ENCODE measurements at regions of chr2 and their contacts with region 1.

Region 1: GRCh38 chr2:71510196-71510807 is 56.9 kb downstream of the DYSF start:
- DNase-seq: peak; percentile 35
- H3K4me3 ChIP-seq: no peak overlapping the region
- H3K27ac ChIP-seq: no peak overlapping the region
- H3K4me1 ChIP-seq: no peaks in the 10 kb centered on the region
- H3K27me3 ChIP-seq: no peaks in the 10 kb centered on the region
- CTCF ChIP-seq: peak; percentile 80 to 95

Region 2: DNA sequence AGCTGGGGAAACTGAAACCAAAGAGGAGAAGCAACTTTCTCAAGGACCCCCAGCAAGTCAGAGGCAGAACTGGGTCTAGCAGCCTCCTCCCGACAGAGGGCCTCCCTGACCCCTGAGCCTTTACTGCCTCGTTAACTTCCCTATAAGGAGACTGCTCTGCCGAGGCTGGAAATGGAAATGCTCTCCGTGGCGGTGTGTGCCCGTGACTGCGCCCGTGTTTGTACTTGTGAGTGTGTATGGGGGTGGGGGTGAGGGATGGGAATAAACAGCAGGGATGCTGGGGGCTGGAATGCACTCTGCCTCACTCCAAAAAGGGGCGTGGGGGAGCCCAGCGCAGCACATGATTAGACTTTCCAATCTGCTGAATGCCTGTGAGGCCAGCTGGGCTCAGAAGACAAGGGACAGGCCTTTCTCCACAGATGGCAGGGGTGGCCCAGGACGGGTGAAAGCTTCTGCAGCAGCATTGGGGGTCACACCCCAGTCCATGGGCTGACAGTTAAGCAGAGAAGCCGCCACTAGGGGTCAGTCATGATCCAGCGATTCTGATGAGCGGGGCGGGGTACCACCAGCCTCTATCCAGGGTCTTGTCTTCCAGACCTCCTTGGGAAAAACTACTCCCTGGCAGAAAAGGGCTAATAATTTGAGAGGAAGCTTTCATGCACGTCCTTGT is 353.0 kb before region 1 on chr2:
- CTCF ChIA-PET with region 1: interaction called, 3 read pairs
- dilution Hi-C with region 1: no loop called
- in situ Hi-C with region 1: no loop called
- intact Hi-C with region 1: loop called (anchors 1 kb)
- DNase-seq: no peak
- H3K4me3 ChIP-seq: no peak overlapping the region
- H3K27ac ChIP-seq: no peak overlapping the region
- H3K4me1 ChIP-seq: no peaks in the 10 kb centered on the region
- H3K27me3 ChIP-seq: no peaks in the 10 kb centered on the region
- CTCF ChIP-seq: peak; percentile 66 to 79

Region 3: DNA sequence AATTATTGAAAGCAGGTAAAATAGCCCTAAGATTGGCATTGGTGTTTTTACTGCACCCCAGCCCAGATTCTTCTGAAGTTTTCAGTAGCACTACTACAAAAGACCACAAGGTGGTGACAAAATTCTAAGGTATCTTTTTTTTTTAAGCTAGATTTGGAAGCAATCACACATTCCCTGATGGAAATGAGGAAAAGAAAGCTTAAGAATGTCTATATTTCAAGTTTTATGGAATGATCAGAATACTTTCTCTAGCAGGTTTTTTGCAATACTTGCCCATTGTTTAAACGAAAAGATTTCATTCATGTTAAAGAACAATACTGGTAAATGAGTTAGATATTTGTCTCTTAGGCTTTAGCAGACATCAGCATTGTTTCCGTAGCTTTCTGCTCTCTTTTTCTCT is 210.8 kb before region 1 on chr2:
- CTCF ChIA-PET with region 1: interaction called, 17 read pairs
- dilution Hi-C with region 1: no loop called
- in situ Hi-C with region 1: loop called (anchors 10 kb)
- intact Hi-C with region 1: loop called (anchors 1 kb)
- DNase-seq: peak; percentile 16
- H3K4me3 ChIP-seq: no peak overlapping the region
- H3K27ac ChIP-seq: no peak overlapping the region
- H3K4me1 ChIP-seq: peaks cover 12% of the 10 kb centered on the region
- H3K27me3 ChIP-seq: no peaks in the 10 kb centered on the region
- CTCF ChIP-seq: peak; percentile 64 to 71

Region 4: DNA sequence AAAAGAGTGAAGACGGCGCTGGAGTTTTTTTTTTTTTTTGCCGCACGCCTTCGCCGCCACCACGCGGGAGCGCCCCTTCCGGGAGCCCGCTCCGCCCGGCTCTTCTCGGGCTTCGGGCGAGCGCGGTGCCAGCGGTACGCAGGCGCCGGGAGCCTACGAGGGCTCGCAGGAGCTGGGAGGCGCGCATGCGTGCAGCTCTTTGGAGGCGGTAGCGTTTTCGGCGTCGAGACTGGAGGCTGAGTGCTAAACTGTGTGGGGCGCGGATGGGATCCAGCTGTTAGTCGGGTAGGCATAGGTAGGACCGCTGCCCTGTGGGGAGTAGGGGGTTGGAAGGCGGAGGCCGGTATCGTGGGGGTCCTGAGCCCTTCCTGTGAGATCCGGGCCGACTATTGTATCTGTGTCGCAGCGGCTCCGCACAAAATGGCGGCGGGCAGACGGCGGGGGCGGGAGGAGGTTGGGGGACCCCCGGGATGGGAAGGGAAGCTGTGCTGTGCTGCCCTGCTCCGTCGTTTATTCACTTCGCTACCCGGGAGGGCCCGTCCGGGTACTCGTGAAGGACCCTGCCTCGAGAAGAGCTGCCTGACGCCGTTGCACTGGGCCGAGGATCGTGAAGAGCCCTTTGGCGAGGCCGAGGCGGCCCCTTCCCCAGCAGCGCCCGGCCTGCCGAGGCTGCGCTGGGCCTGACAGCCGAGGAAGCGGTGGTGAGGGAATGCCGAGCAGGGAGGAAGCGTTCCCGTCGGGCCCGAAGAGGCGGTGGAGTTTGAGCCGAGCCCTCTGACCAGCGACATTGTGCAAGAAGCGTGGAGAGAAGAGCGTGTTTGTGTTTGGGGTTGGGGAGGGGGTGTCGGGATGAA is 178.5 kb before region 1 on chr2 and contains the start of gene ZNF638:
- CTCF ChIA-PET with region 1: interaction called, 3 read pairs
- dilution Hi-C with region 1: no loop called
- in situ Hi-C with region 1: no loop called
- intact Hi-C with region 1: loop called (anchors 1 kb)
- DNase-seq: peak; percentile 90
- H3K4me3 ChIP-seq: peak within 1 kb of the TSS; percentile 93 to 100 (median 99)
- H3K27ac ChIP-seq: peak within 1 kb of the TSS; percentile 93
- H3K4me1 ChIP-seq: peaks cover 8% of the 10 kb centered on the region
- H3K27me3 ChIP-seq: no peaks in the 10 kb centered on the region
- CTCF ChIP-seq: peak; percentile 45 to 69
- total RNA-seq, gene ZNF638: 80.0 to 118 TPM

Region 5: DNA sequence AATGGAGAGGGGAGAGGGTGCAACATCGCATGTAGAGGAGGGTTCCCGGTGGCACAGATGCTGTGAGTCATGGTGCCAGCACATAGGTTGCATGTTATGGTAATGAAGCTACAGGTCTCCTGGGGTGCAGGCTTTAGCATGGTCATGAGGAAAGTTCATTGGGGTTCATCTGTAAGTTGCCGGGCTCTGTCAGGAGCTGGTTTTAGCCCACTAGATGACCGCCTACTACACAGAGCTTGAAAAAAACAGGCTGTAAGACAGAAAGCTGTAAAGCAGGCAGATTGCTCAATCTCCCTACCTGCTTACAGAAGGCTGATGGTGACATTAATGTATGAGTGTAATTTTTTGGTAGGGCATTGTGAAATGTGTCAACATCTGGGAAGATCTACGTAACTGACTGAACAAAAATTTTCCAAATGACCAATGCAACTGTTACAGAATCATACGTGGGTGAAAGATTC is 33.0 kb before region 1 on chr2:
- CTCF ChIA-PET with region 1: interaction called, 12 read pairs
- dilution Hi-C with region 1: no loop called
- in situ Hi-C with region 1: no loop called
- intact Hi-C with region 1: no loop called
- DNase-seq: peak; percentile 56
- H3K4me3 ChIP-seq: no peak overlapping the region
- H3K27ac ChIP-seq: no peak overlapping the region
- H3K4me1 ChIP-seq: no peaks in the 10 kb centered on the region
- H3K27me3 ChIP-seq: no peaks in the 10 kb centered on the region
- CTCF ChIP-seq: no peak